ENCODE measurements at regions of chr6 and their contacts with region 1.

Region 1: DNA sequence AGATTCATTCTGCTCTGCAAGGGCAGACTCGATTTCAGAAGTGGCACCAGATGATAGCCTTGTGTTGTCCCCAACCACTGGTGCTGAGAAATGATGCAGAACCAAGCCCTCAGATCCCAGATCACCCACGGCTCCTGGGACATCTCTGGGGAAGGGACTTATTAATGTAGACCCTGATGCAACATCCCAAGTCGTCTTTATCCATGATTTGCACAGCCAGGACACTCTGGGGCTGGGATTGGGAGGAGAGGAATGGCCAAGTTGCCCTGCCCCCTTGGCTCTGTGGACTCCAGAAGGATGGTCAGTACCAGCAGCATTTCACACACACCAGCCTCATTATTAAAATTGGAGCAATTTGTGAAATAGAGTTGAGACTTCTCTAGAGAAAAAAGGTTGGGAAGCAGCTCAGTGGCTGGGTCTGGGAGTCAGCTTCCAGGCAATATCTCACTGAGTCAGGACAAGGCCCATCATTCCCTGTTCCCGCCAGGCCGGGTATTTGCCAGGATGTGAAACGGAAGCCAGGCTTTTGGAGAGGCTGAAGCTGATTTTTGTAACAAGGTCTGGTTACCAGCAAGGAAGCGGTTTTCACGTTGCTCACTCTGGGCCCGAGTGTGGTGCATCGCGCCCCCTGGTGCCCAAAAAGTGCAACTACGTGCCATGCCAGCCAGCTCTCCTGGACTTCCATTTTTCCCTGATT is 67.4 kb downstream of the ZBTB2 start:
- DNase-seq: peak; percentile 70 to 74
- H3K4me3 ChIP-seq: peak overlapping the region; percentile 68; the same call in 1 of the 2 replicates
- H3K27ac ChIP-seq: peak overlapping the region; percentile 48
- H3K4me1 ChIP-seq: peaks cover 39% of the 10 kb centered on the region
- H3K27me3 ChIP-seq: no peaks in the 10 kb centered on the region
- CTCF ChIP-seq: peak; percentile 96

Region 2: GRCh38 chr6:151004415-151005024 is 319.4 kb before region 1 on chr6:
- CTCF ChIA-PET with region 1: interaction called, 10 read pairs
- POLR2A ChIA-PET with region 1: no interaction called
- intact Hi-C with region 1: no loop called
- DNase-seq: peak; percentile 5 to 95
- H3K4me3 ChIP-seq: no peak overlapping the region
- H3K27ac ChIP-seq: peak overlapping the region; percentile 59
- H3K4me1 ChIP-seq: peaks cover 25% of the 10 kb centered on the region
- H3K27me3 ChIP-seq: no peaks in the 10 kb centered on the region
- CTCF ChIP-seq: no peak

Region 3: GRCh38 chr6:151014404-151015100 is 309.4 kb before region 1 on chr6:
- CTCF ChIA-PET with region 1: interaction called, 24 read pairs
- POLR2A ChIA-PET with region 1: no interaction called
- intact Hi-C with region 1: loop called (anchors 1 kb)
- DNase-seq: peak; percentile 56 to 60
- H3K4me3 ChIP-seq: no peak overlapping the region
- H3K27ac ChIP-seq: no peak overlapping the region
- H3K4me1 ChIP-seq: peaks cover 6% of the 10 kb centered on the region; the same call in 1 of the 2 replicates
- H3K27me3 ChIP-seq: no peaks in the 10 kb centered on the region
- CTCF ChIP-seq: peak; percentile 97

Region 4: DNA sequence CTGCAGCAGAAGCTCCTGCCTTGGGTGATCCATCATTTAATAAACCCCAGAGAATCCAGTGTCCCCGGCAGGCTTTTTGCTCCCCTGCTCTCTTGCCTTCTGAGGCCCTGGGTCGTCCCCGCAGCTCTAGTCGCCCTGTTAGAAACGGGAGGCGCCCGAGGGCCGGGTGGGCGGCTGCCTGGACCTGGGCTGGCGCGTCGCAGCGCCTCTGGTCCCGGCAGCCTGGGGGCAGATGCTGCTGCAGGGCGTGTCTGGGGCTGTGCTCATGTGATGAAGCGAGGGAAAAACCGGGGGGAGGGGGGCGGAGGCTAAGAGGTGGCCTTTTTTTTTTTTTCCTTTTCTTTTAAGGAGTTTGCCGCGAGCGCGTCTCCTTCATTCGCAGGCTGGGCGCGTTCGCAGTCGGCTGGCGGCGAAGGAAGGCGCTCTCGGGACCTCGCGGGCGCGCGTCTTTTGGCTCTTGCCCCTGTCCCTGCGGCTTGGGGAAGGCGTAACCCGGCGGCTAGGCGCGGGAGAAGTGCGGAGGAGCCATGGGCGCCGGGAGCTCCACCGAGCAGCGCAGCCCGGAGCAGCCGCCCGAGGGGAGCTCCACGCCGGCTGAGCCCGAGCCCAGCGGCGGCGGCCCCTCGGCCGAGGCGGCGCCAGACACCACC is 83.8 kb before region 1 on chr6:
- CTCF ChIA-PET with region 1: no interaction called
- POLR2A ChIA-PET with region 1: no interaction called
- intact Hi-C with region 1: loop called (anchors 10 kb)
- DNase-seq: peak; percentile 45 to 54
- H3K4me3 ChIP-seq: peak overlapping the region; percentile 97
- H3K27ac ChIP-seq: no peak overlapping the region
- H3K4me1 ChIP-seq: peaks cover 22% of the 10 kb centered on the region
- H3K27me3 ChIP-seq: no peaks in the 10 kb centered on the region
- CTCF ChIP-seq: no peak

Measured in PC-9 (cell line).